IMR-90 (cell line): ENCODE measurements at regions of chr16 and their contacts with region 1.

Region 1: GRCh38 chr16:11407047-11407982 is 62.1 kb downstream of the RMI2 start:
- DNase-seq: peak; percentile 77
- ATAC-seq: peak; percentile 79
- H3K4me3 ChIP-seq: no peak overlapping the region
- H3K27ac ChIP-seq: no peak overlapping the region
- H3K4me1 ChIP-seq: peaks cover 11% of the 10 kb centered on the region
- H3K27me3 ChIP-seq: peaks cover 4% of the 10 kb centered on the region; the same call in 1 of the 2 replicates
- CTCF ChIP-seq: peak; percentile 82
- POLR2A ChIP-seq: no peak
- RAD21 ChIP-seq: peak; percentile 84

Region 2: DNA sequence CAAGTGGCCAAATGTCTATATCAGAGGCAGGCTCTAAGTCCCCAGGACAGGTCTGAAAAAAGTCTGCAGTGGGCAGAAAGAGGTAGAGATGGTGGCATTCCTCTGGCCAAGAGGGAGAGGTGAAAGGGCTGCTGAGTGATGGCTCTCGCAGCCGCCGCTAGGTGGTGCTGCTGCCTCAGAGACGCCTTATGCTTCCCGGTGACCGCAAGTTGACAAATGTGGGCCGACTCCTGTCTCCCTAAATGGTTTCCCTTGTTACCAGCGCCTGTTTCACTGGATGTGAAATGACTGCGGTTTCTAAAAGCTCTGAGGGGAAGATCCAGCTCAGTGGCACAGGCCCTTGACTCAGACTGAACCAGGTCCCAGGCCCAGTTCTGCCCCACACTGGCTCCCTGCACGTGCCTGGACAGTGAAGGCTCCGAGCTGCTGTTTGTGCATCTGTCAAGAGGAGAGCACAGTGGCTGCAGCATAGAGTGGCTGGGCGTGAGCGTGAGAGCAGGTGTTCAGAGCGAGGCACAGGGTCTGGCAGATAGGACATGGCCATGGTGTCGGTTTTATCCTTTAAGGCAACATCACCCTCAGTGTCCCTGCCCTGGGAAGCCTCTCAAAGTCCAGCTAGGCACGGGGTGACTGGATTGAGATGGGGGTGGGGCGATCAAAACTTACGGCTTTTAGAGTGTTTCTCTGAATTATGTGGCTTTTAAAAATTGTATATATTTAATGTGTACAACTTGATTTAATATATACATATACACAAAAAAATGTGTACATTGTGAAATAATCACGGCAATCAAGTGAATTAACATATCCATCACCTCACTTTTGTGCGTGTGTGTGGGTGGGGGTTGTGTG is 443.1 kb before region 1 on chr16:
- CTCF ChIA-PET with region 1: interaction called, 3 read pairs
- POLR2A ChIA-PET with region 1: no interaction called
- dilution Hi-C with region 1: no loop called
- in situ Hi-C with region 1: no loop called
- intact Hi-C with region 1: loop called (anchors 5 kb)
- DNase-seq: peak; percentile 86
- ATAC-seq: peak; percentile 85
- H3K4me3 ChIP-seq: no peak overlapping the region
- H3K27ac ChIP-seq: peak overlapping the region; percentile 8; the same call in 1 of the 2 replicates
- H3K4me1 ChIP-seq: peaks cover 20% of the 10 kb centered on the region
- H3K27me3 ChIP-seq: no peaks in the 10 kb centered on the region
- CTCF ChIP-seq: peak; percentile 98
- POLR2A ChIP-seq: peak; percentile 35; the same call in 1 of the 2 replicates
- RAD21 ChIP-seq: peak; percentile 98

Region 3: GRCh38 chr16:11356573-11357331 is 50.6 kb before region 1 on chr16:
- CTCF ChIA-PET with region 1: no interaction called
- POLR2A ChIA-PET with region 1: no interaction called
- dilution Hi-C with region 1: no loop called
- in situ Hi-C with region 1: no loop called
- intact Hi-C with region 1: no loop called
- DNase-seq: peak; percentile 61
- ATAC-seq: peak; percentile 67
- H3K4me3 ChIP-seq: no peak overlapping the region
- H3K27ac ChIP-seq: peak overlapping the region; percentile 44; the same call in 1 of the 2 replicates
- H3K4me1 ChIP-seq: peaks cover 45% of the 10 kb centered on the region
- H3K27me3 ChIP-seq: no peaks in the 10 kb centered on the region
- CTCF ChIP-seq: peak; percentile 77
- POLR2A ChIP-seq: no peak
- RAD21 ChIP-seq: peak; percentile 80

Region 4: GRCh38 chr16:11535471-11535870 is 128.2 kb after region 1 on chr16:
- CTCF ChIA-PET with region 1: interaction called, 4 read pairs
- POLR2A ChIA-PET with region 1: no interaction called
- dilution Hi-C with region 1: no loop called
- in situ Hi-C with region 1: no loop called
- intact Hi-C with region 1: loop called (anchors 5 kb)
- DNase-seq: no peak
- ATAC-seq: no peak
- H3K4me3 ChIP-seq: no peak overlapping the region
- H3K27ac ChIP-seq: no peak overlapping the region
- H3K4me1 ChIP-seq: peaks cover 5% of the 10 kb centered on the region; the same call in 1 of the 2 replicates
- H3K27me3 ChIP-seq: no peaks in the 10 kb centered on the region
- CTCF ChIP-seq: no peak
- POLR2A ChIP-seq: no peak
- RAD21 ChIP-seq: no peak

Region 5: DNA sequence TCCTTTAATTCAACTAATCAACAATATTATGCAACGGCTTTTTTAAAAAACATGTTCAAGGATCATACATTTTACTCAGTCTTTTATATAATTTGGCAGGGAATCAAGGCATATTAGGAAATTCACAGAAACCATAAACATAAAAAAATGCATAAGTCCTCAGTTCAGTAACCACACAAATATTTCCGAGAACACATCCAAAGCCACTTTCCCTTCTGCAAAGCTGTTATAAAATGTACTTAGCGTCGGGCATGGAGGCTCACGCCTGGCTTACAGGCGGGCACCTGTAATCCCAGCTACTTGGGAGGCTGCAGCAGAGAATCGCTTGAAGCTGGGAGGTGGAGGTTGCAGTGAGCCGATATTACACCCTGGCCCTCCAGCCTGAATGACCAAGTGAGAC is 399.4 kb after region 1 on chr16:
- CTCF ChIA-PET with region 1: no interaction called
- POLR2A ChIA-PET with region 1: no interaction called
- dilution Hi-C with region 1: no loop called
- in situ Hi-C with region 1: loop called (anchors 10 kb)
- intact Hi-C with region 1: loop called (anchors 5 kb)
- DNase-seq: peak; percentile 55
- ATAC-seq: no peak
- H3K4me3 ChIP-seq: no peak overlapping the region
- H3K27ac ChIP-seq: no peak overlapping the region
- H3K4me1 ChIP-seq: peaks cover 10% of the 10 kb centered on the region
- H3K27me3 ChIP-seq: no peaks in the 10 kb centered on the region
- CTCF ChIP-seq: no peak
- POLR2A ChIP-seq: no peak
- RAD21 ChIP-seq: no peak